ENCODE measurements at regions of chr2 and their contacts with region 1.

Region 1: DNA sequence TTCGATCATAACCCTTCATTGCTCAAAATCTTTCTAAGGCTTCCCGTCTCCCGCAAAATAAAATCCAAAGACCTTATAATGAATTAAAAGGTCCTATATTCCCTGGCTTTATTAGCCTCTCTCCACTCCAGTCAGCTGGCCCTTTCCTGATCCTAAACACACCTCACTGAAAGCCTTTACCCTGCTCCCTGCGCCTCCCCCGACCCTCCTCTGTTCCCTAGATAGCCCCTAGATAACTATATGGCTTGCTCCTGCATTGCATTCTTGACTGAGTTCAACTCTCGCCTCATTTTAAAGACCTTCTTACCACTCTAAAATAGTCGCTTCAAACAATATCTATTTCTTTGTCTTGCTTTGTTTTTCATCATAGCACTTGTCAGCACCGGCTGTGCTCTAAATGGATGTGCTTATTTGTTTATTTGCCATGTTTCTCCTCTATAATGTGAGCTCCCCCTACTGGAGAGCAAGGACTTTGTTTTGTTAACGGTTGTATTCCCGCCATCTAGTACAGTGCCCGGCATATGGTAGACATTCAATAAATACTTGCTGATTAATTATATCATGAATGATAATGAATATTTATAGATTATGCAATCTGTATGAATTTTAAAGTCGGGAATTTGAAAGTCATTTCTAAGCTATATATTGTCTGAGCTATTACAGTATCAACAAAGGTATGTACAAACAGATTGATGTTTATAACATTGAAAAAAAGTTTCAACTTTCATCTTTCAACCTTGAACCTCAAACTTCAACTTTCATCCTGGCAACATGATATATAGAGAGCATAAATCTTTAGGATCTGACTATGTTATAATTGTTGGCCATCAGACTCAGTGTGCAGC is 32.4 kb upstream of the VIT start:
- DNase-seq: peak; percentile 32
- H3K4me3 ChIP-seq: no peak overlapping the region
- H3K27ac ChIP-seq: no peak overlapping the region
- H3K4me1 ChIP-seq: no peaks in the 10 kb centered on the region
- H3K27me3 ChIP-seq: no peaks in the 10 kb centered on the region
- CTCF ChIP-seq: peak; percentile 57

Region 2: GRCh38 chr2:36539631-36540030 is 124.4 kb before region 1 on chr2:
- intact Hi-C with region 1: loop called (anchors 10 kb)
- DNase-seq: no peak
- H3K4me3 ChIP-seq: no peak overlapping the region
- H3K27ac ChIP-seq: no peak overlapping the region
- H3K4me1 ChIP-seq: no peaks in the 10 kb centered on the region
- H3K27me3 ChIP-seq: no peaks in the 10 kb centered on the region
- CTCF ChIP-seq: no peak